WTC11 (cell line): ENCODE measurements at regions of chr16 and their contacts with region 1.

Region 1: DNA sequence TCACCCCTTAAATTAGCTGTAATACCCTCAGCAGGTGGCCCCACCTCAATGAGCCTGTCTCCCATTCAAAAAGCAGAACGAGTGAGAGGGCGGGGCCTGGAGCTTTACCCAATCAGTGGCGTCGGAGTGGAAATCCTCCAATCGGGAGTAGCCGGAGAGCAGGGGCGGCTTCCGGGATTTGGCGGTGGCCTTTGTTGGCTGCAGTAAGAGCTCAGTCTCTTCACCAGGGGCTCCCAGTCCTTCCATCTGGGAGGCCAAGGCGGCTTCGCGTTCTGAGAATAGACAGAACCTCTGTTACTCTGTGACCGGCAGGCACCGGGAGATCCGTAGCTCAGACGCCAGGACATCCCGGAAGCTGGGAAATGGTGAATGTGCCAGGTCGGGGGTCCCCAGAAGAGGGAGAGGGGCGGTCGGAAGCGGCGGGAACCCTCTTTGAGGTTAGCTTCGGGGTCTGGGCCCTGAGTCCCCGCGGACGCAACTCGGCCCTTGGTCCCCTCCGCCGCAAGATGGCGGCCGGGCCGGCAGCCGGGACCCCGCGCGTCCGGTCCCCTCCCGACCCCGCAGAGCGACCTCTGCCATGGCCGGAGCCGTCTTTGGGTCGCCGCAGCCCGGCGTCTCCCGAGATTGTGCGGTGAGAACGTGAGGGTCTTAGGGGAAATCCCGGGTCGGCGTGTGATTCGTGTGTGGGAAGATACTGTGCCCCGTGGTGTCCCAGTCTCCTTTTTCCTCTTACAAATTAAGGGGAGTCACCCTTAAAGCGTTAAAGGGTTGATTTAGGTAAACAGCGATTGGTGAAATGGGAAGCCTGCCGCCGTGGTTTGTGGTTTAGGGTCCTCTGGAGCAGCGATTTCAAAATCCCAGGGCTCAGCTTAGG is 160.3 kb upstream of the ZNF267 start:
- DNase-seq: peak; percentile 95
- ATAC-seq: peak; percentile 93
- H3K4me3 Mint-ChIP-seq: peak overlapping the region; percentile 98
- H3K27ac Mint-ChIP-seq: peak overlapping the region; percentile 99
- H3K4me1 Mint-ChIP-seq: peaks cover 32% of the 10 kb centered on the region
- H3K27me3 Mint-ChIP-seq: no peaks in the 10 kb centered on the region
- CTCF ChIP-seq: no peak

Region 2: DNA sequence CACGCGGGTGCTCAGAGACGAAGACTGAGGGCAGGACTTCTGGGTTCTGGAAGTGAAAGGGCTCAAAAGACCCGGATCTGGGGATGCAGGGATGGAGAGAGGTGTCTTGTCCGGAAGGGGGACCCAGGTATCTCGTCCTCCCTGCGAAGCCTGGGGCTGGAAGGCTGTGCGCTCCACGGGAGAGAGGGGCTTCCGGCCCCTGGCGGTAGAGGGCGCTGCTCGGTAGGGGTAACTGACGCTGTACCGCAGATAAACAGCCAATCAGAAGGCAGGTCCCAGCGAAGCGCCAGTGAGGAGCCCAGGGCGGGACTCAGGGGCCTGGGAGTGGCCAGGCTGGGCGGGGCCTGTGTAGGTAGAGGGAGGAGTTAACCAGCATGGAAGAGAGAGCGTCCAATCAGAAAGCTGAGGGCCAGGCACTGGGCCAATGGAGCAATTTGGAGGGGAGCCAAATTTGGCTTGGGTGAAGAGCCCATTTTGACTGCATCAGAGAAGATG is 240.6 kb before region 1 on chr16:
- CTCF ChIA-PET with region 1: interaction called, 12 read pairs
- POLR2A ChIA-PET with region 1: interaction called, 7 read pairs
- DNase-seq: peak; percentile 93
- ATAC-seq: peak; percentile 58
- H3K4me3 Mint-ChIP-seq: peak overlapping the region; percentile 82
- H3K27ac Mint-ChIP-seq: no peak overlapping the region
- H3K4me1 Mint-ChIP-seq: peaks cover 11% of the 10 kb centered on the region
- H3K27me3 Mint-ChIP-seq: peaks cover 65% of the 10 kb centered on the region
- CTCF ChIP-seq: peak; percentile 90

Region 3: DNA sequence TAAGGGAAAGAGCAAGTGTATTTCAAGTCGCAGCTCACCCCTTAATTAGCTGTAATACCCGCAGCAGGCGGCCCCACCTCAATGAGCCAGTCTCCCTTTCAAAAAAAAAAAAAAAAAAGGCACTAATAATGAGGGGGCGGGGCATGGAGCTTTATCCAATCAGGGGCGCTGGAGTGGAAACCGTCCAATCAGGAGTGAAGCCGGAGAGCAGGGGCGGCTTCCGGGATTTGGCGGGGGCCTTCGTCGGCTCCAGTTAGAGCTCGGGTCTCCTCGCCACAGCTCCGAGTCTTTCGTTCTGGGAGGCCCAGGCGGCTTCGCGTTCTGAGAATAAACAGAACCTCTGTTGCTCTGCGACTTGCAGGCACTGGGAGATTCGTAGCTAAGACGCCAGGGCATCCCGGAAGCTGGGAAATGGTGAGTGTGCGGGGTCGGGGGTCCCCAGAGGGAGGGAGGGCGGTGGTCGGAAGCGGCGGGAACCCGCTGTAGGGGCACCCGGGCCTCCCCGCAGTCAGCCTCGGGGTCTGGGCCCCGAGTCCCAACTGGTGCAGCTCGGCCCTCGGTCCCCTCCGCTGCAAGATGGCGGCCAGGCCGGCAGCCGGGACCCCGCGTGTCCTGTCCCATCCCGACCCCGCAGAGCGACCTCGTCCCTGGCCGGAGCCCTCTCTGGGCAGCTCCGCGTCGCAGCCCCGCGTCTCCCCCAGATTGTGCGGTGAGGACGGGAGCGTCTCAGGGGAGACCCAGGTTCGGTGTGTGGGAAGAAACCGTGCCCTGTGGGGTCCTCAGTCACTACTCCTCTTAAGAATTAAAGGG is 160.5 kb after region 1 on chr16 and contains the start of gene ZNF267:
- CTCF ChIA-PET with region 1: interaction called, 7 read pairs
- POLR2A ChIA-PET with region 1: interaction called, 22 read pairs
- DNase-seq: peak; percentile 92
- ATAC-seq: peak; percentile 97
- H3K4me3 Mint-ChIP-seq: peak within 1 kb of the TSS; percentile 91
- H3K27ac Mint-ChIP-seq: peak within 1 kb of the TSS; percentile 88; the same call in 1 of the 2 replicates
- H3K4me1 Mint-ChIP-seq: peaks cover 22% of the 10 kb centered on the region
- H3K27me3 Mint-ChIP-seq: peaks cover 21% of the 10 kb centered on the region
- CTCF ChIP-seq: no peak
- total RNA-seq, gene ZNF267: 18.6 to 25.3 TPM (median 21.8 TPM) in 3 replicates